ENCODE measurements at regions of chrX and their contacts with region 1.

Region 1: GRCh38 chrX:9341291-9342201 is 123.3 kb upstream of the TBL1X start:
- DNase-seq: peak in 1 of 2 donors; percentile 65
- ATAC-seq: peak; percentile 37 to 46
- H3K4me3 ChIP-seq: peak overlapping the region; percentile 7 to 40 (median 18)
- H3K27ac ChIP-seq: peak overlapping the region; percentile 73 to 83 (median 78)
- H3K4me1 ChIP-seq: peaks cover 11 to 28% of the 10 kb centered on the region in 2 donors
- H3K27me3 ChIP-seq: no peaks in the 10 kb centered on the region
- CTCF ChIP-seq: no peak
- POLR2A ChIP-seq: no peak

Region 2: GRCh38 chrX:9456250-9457074 is 114.9 kb after region 1 on chrX:
- in situ Hi-C with region 1: loop called in 3 of 4 experiments (anchors 5 to 10 kb)
- intact Hi-C with region 1: no loop called
- DNase-seq: no peak
- ATAC-seq: no peak
- H3K4me3 ChIP-seq: no peak overlapping the region
- H3K27ac ChIP-seq: no peak overlapping the region
- H3K4me1 ChIP-seq: no peaks in the 10 kb centered on the region
- H3K27me3 ChIP-seq: no peaks in the 10 kb centered on the region
- CTCF ChIP-seq: no peak
- POLR2A ChIP-seq: no peak

Region 3: DNA sequence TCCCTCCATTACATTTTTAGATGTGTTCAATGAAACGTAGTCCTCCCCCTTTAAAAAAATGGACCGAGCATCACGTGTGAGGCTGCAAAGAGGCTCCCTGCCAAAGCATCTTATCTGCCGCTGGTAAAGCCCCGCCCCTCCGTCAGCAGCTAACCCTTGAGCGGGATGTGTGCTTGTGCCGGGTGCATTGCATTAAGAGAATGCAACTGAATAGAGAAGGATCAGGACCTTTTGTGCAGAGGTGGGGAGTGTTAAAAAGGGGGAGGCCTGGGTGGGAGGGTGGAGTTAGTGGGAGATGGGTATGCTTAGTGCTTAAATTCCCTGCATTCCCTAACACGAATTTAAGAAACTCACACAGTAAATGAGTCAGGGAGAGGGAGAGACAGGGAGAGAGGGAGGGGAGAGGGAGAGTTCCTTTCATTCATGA is 189.3 kb after region 1 on chrX:
- in situ Hi-C with region 1: no loop called
- intact Hi-C with region 1: loop called (anchors 5 kb)
- DNase-seq: peak; percentile 4 to 24
- ATAC-seq: no peak
- H3K4me3 ChIP-seq: no peak overlapping the region
- H3K27ac ChIP-seq: no peak overlapping the region
- H3K4me1 ChIP-seq: peaks cover 0 to 3% of the 10 kb centered on the region in 2 donors
- H3K27me3 ChIP-seq: no peaks in the 10 kb centered on the region
- CTCF ChIP-seq: no peak
- POLR2A ChIP-seq: no peak